Aorta (tissue), 5 donors: ENCODE measurements at regions of chr7 and their contacts with region 1.

Region 1: GRCh38 chr7:33062782-33063443 is 337 bp upstream of the NT5C3A start:
- DNase-seq: peak; percentile 95 to 98
- ATAC-seq: peak; percentile 100
- H3K4me3 ChIP-seq: peak overlapping the region; percentile 22 to 50
- H3K27ac ChIP-seq: peak overlapping the region in 1 of 2 donors; percentile 70
- H3K4me1 ChIP-seq: peaks cover 0 to 3% of the 10 kb centered on the region in 2 donors
- H3K27me3 ChIP-seq: no peaks in the 10 kb centered on the region

Region 2: GRCh38 chr7:32891800-32892520 is 171.0 kb before region 1 on chr7:
- intact Hi-C with region 1: loop called in 1 of 2 experiments (anchors 5 kb)
- DNase-seq: peak; percentile 99
- ATAC-seq: peak; percentile 95
- H3K4me3 ChIP-seq: peak overlapping the region; percentile 81 to 99
- H3K27ac ChIP-seq: peak overlapping the region; percentile 91 to 95
- H3K4me1 ChIP-seq: no peaks in the 10 kb centered on the region
- H3K27me3 ChIP-seq: no peaks in the 10 kb centered on the region

Region 3: GRCh38 chr7:32957326-32958045 is 105.4 kb before region 1 on chr7 and contains the start of gene FKBP9:
- intact Hi-C with region 1: loop called in 1 of 2 experiments (anchors 2 kb)
- DNase-seq: peak; percentile 91 to 95
- ATAC-seq: peak; percentile 96
- H3K4me3 ChIP-seq: peak within 1 kb of the TSS; percentile 68 to 69
- H3K27ac ChIP-seq: peak within 1 kb of the TSS in 1 of 2 donors; percentile 22
- H3K4me1 ChIP-seq: no peaks in the 10 kb centered on the region
- H3K27me3 ChIP-seq: no peaks in the 10 kb centered on the region
- total RNA-seq, gene FKBP9: 122 to 193 TPM

Region 4: GRCh38 chr7:33012364-33012763 is 50.5 kb before region 1 on chr7:
- intact Hi-C with region 1: no loop called
- DNase-seq: no peak
- ATAC-seq: no peak
- H3K4me3 ChIP-seq: no peak overlapping the region
- H3K27ac ChIP-seq: no peak overlapping the region
- H3K4me1 ChIP-seq: no peaks in the 10 kb centered on the region
- H3K27me3 ChIP-seq: no peaks in the 10 kb centered on the region

Region 5: GRCh38 chr7:33109005-33109757 is 46.3 kb after region 1 on chr7 and contains the start of gene RP9:
- intact Hi-C with region 1: loop called in 1 of 2 experiments (anchors 5 kb)
- DNase-seq: peak; percentile 76 to 88
- ATAC-seq: peak; percentile 93
- H3K4me3 ChIP-seq: peak within 1 kb of the TSS; percentile 87 to 93
- H3K27ac ChIP-seq: peak within 1 kb of the TSS in 1 of 2 donors; percentile 64
- H3K4me1 ChIP-seq: peaks cover 5% of the 10 kb centered on the region in 2 donors
- H3K27me3 ChIP-seq: no peaks in the 10 kb centered on the region
- total RNA-seq, gene RP9: 9.4 to 13.8 TPM

Region 6: GRCh38 chr7:33411020-33411419 is 348.1 kb after region 1 on chr7:
- intact Hi-C with region 1: no loop called
- DNase-seq: no peak
- ATAC-seq: no peak
- H3K4me3 ChIP-seq: no peak overlapping the region
- H3K27ac ChIP-seq: no peak overlapping the region
- H3K4me1 ChIP-seq: peaks cover 0 to 1% of the 10 kb centered on the region in 2 donors
- H3K27me3 ChIP-seq: no peaks in the 10 kb centered on the region